ENCODE measurements at regions of chr19 and their contacts with region 1.

Region 1: DNA sequence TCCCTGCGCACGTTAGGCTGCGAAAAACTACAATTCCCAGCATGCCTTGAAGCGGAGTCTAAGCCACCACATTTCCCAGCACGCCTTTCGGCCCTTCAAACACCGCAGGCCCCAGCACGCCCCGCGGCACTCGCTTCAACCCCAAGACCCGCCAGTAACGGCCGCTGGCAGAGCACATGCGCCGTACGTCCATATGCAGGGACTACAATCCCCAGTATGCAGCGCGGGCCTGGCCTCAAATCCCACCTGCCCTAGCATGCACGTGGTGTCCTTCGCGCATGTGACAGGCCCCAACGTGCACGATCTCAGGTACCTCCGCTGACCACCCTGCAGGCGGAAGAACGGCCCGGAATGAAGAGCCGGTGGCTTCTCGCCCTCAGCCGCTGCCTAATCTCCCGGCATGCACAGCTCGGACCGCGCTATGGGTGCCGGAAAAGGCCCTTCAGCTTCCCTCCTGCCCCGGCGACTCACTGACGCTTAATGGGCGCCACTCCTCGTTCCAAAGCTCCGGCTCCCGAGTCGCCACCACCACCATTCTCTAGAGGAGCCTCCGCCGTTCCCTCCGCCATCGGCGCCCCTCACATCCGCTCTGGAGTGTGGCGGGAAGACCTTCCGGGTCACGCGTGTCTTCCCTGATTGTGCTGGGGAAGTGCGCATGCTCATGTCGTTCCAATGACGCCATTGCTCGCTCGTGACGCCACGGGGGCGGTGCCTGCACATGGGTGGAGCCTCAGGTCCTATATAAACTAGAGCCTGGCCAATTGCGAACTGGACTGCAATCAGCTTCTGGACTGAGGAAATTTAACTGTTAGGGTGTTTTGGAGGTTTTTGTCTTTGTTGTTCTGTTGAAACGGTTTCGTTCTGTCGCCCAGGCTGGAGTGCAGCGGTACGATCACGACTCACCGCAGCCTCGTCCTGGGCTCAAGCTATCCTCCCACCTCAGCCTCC is at the start of gene DUS3L:
- DNase-seq: peak; percentile 95 to 96
- ATAC-seq: peak; percentile 96 to 99 (median 98)
- H3K4me3 ChIP-seq: peak within 1 kb of the TSS; percentile 65 to 92 (median 84)
- H3K27ac ChIP-seq: peak within 1 kb of the TSS; percentile 85 to 100 (median 97)
- H3K4me1 ChIP-seq: peaks cover 2 to 9% (median 6%) of the 10 kb centered on the region in 9 donors
- H3K27me3 ChIP-seq: no peaks in the 10 kb centered on the region
- CTCF ChIP-seq: no peak
- total RNA-seq, gene DUS3L: 11.5 to 27.8 (median 14.2) TPM

Region 2: DNA sequence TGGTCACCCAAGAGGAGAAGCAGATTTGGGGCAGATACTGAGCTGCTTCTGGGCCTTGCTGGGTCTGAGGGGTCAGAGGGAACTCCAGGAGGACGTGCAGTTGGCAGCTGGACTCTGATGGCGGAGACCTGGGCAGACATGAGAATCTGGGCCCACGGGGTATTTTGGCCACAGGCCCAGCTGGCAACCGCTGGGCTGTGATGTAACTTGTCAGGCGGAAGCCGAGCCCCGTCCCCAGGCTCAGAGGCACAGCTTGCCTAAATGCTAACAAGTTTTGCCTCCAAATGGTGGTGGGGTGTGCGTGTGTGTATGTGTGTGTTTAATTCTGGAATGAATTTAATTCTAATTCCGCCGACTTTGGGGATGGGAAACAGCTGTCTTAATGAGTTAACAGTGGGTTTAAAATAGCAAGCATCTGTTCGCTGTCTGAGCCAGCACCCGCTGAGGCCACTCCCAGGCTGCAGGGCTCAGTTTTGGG is 324.0 kb before region 1 on chr19:
- intact Hi-C with region 1: no loop called
- DNase-seq: peak; percentile 17 to 34
- ATAC-seq: peak; percentile 30 to 70 (median 56)
- H3K4me3 ChIP-seq: no peak overlapping the region
- H3K27ac ChIP-seq: no peak overlapping the region
- H3K4me1 ChIP-seq: peaks cover 0 to 12% (median 4%) of the 10 kb centered on the region in 9 donors
- H3K27me3 ChIP-seq: peaks cover 0 to 13% (median 0%) of the 10 kb centered on the region in 7 donors
- CTCF ChIP-seq: no peak

Region 3: GRCh38 chr19:5622463-5623396 is 168.1 kb before region 1 on chr19 and contains the starts of genes SAFB and SAFB2:
- intact Hi-C with region 1: loop called in 2 of 10 experiments (anchors 2 to 5 kb)
- DNase-seq: peak; percentile 99 to 100
- ATAC-seq: peak; percentile 95 to 98 (median 96)
- H3K4me3 ChIP-seq: peak within 1 kb of the TSS; percentile 89 to 100 (median 97)
- H3K27ac ChIP-seq: peak within 1 kb of the TSS; percentile 93 to 98 (median 96)
- H3K4me1 ChIP-seq: peaks cover 23 to 83% (median 76%) of the 10 kb centered on the region in 9 donors
- H3K27me3 ChIP-seq: no peaks in the 10 kb centered on the region
- CTCF ChIP-seq: no peak
- total RNA-seq, gene SAFB: 44.0 to 72.5 (median 50.2) TPM
- total RNA-seq, gene SAFB2: 34.4 to 70.4 (median 45.9) TPM

Region 4: GRCh38 chr19:5719961-5720790 is 70.7 kb before region 1 on chr19 and contains the starts of genes CATSPERD and LONP1:
- intact Hi-C with region 1: loop called in 1 of 10 experiments (anchors 2 kb)
- DNase-seq: peak; percentile 97 to 98
- ATAC-seq: peak; percentile 96 to 99 (median 98)
- H3K4me3 ChIP-seq: peak within 1 kb of the TSS; percentile 86 to 100 (median 96)
- H3K27ac ChIP-seq: peak within 1 kb of the TSS; percentile 83 to 99 (median 93)
- H3K4me1 ChIP-seq: peaks cover 0 to 46% (median 29%) of the 10 kb centered on the region in 9 donors
- H3K27me3 ChIP-seq: no peaks in the 10 kb centered on the region
- CTCF ChIP-seq: peak; percentile 85 to 99 (median 94)
- total RNA-seq, gene CATSPERD: not detected
- total RNA-seq, gene LONP1: 71.4 to 101 (median 88.5) TPM

Region 5: GRCh38 chr19:5977785-5978605 is 187.1 kb after region 1 on chr19 and contains the start of gene RANBP3:
- intact Hi-C with region 1: loop called in 1 of 10 experiments (anchors 1 kb)
- DNase-seq: peak; percentile 98 to 99
- ATAC-seq: peak; percentile 98 to 99 (median 98)
- H3K4me3 ChIP-seq: peak within 1 kb of the TSS; percentile 80 to 100 (median 96)
- H3K27ac ChIP-seq: peak within 1 kb of the TSS; percentile 65 to 95 (median 92)
- H3K4me1 ChIP-seq: peaks cover 10 to 59% (median 47%) of the 10 kb centered on the region in 9 donors
- H3K27me3 ChIP-seq: no peaks in the 10 kb centered on the region
- CTCF ChIP-seq: no peak
- total RNA-seq, gene RANBP3: 51.4 to 76.1 (median 63.3) TPM